Adrenal gland (tissue), 19 donors: ENCODE measurements at regions of chr1 and their contacts with region 1.

Region 1: GRCh38 chr1:109426278-109427170 is at the start of gene PSMA5:
- DNase-seq: peak; percentile 95 to 99 (median 99)
- H3K4me3 ChIP-seq: peak within 1 kb of the TSS; percentile 81 to 92 (median 87)
- H3K27ac ChIP-seq: peak within 1 kb of the TSS; percentile 66 to 96 (median 77)
- H3K4me1 ChIP-seq: peaks cover 13 to 37% of the 10 kb centered on the region in 2 donors
- H3K27me3 ChIP-seq: no peaks in the 10 kb centered on the region
- CTCF ChIP-seq: no peak
- POLR2A ChIP-seq: peak; percentile 72 to 93
- total RNA-seq, gene PSMA5: 22.8 to 187 (median 67.8) TPM

Region 2: DNA sequence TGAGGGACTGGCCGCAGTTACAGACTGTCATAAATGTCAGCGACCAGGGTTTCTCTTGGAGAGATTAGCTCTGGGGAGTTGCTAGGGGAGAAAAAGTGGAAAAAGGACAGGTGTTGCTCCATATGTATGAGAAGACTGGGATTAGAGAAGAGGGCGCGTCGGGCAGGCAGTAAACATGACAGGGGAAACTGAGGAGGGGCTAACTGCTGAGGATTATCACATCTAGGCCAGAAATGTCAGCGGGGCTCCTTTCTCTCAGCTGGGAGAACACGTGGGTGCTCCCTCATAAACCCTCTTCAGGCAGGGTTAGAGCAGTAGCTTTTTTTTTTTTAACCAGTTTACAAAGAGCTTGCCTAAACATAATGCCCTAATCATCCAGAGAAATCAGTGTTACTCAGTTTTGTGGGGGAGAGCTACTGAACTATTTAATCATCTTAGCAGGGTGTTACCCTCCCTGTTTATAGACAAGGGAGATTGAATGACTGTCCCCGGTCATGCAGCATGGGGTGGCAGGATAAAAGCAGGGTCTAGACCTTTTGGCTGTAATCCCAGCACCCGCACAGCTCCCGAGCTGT is 277.4 kb before region 1 on chr1:
- intact Hi-C with region 1: no loop called
- DNase-seq: no peak
- H3K4me3 ChIP-seq: no peak overlapping the region
- H3K27ac ChIP-seq: peak overlapping the region in 1 of 5 donors; percentile 57
- H3K4me1 ChIP-seq: peaks cover 9 to 19% of the 10 kb centered on the region in 2 donors
- H3K27me3 ChIP-seq: no peaks in the 10 kb centered on the region
- CTCF ChIP-seq: no peak
- POLR2A ChIP-seq: no peak

Region 3: DNA sequence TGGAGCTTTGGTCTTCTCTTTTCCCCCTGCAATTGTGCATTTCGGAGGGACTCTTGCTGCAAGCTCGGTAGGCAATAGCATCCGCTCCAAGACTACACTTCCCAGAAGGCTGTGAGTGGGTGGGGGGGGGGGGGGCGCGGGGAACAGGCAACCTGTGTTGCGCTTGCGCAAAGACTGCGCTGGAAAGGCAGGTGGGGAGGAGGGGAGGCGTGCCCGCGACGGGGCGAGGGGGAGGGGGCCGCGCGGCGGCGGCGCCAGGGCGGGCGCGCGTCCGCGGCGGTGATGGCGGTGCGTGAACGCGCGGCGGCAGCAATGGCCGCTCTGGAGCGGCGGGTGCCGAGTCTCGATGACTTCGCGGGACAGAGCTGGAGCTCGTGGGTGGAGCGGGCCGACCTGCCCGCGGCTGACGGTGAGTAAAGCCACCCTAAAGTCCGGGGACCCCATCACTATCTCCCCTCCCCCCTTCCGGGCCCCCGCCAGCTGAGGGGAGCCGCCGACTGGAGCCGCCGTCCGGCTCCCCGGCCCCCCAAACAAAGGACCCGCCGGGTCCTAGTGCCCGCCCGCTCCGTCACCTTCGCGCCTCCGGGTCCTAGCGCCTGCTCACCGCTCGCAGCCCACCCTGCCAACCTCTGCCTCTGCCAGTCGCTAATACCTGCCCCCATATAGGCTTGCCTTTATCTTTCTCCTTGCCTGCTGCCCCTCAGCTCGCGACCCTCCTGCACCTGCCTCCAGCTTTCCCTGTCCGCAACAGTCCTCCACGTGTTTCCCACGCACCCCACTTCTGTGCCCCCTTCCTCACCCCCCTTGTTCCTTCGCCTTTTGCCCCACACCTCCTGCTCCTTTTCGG is 57.4 kb after region 1 on chr1 and contains the start of gene ATXN7L2:
- intact Hi-C with region 1: loop called (anchors 5 to 10 kb)
- DNase-seq: peak; percentile 91 to 96 (median 94)
- H3K4me3 ChIP-seq: peak within 1 kb of the TSS in 3 of 4 donors; percentile 38 to 88 (median 72)
- H3K27ac ChIP-seq: peak within 1 kb of the TSS in 4 of 5 donors; percentile 75 to 97 (median 94)
- H3K4me1 ChIP-seq: peaks cover 13 to 21% of the 10 kb centered on the region in 2 donors
- H3K27me3 ChIP-seq: no peaks in the 10 kb centered on the region
- CTCF ChIP-seq: no peak
- POLR2A ChIP-seq: peak; percentile 47 to 70
- total RNA-seq, gene ATXN7L2: 5.8 to 16.3 (median 9.1) TPM

Region 4: DNA sequence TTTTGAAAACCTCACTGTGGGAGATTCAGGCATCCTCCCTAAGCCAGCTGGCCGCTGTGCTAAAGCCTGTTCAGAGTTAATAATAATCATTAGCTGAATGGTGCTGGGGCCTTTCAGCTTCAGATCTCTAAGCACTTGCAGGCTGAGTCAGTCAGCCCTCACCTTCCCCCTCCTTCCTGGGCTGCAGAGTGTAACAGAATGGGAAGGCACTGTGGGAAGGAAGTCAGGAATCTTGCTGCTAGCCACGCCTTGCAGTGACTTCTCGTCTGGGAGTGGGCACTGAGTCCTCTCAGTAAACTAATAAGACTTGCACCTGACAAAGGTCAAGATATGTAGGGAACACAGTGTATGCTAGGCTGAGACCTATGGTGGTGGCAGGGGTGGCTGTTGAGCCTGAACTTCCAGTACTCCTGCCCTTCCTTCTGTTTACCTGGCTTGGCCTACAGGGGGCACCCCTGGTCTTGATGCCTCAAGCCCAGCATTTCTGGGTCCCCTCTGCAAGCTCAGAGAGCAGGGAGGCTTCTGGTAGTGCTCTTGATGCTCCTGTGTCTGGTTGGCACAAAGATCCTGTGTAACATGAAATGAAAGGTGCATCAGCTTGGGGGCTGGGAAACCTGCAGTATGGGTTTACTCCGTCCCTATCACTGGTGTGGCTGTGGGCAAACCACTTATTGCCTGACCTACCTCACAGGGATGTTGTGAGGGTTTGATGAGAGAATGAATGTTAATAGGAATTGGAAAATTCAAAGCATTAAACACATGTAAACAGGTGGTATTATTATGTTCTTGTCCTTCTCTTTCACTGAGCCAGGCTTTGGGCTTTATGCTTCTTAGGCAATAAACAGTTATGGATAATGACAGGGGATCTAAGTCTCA is 73.4 kb after region 1 on chr1:
- intact Hi-C with region 1: no loop called
- DNase-seq: peak in 6 of 7 donors; percentile 61 to 78 (median 64)
- H3K4me3 ChIP-seq: no peak overlapping the region
- H3K27ac ChIP-seq: peak overlapping the region in 3 of 5 donors; percentile 36 to 74 (median 65)
- H3K4me1 ChIP-seq: peaks cover 17 to 28% of the 10 kb centered on the region in 2 donors
- H3K27me3 ChIP-seq: no peaks in the 10 kb centered on the region
- CTCF ChIP-seq: peak in 5 of 6 experiments; percentile 10 to 49 (median 33)
- POLR2A ChIP-seq: peak in 1 of 2 donors; percentile 33